HCT116 (cell line): ENCODE measurements at regions of chr4 and their contacts with region 1.

Region 1: GRCh38 chr4:47562297-47562696 is 77.2 kb downstream of the ATP10D start:
- DNase-seq: no peak
- ATAC-seq: no peak
- H3K4me3 ChIP-seq: no peak overlapping the region
- H3K27ac ChIP-seq: no peak overlapping the region
- H3K4me1 ChIP-seq: peaks cover 18 to 22% of the 10 kb centered on the region in 2 experiments
- H3K27me3 ChIP-seq: no peaks in the 10 kb centered on the region
- CTCF ChIP-seq: no peak
- POLR2A ChIP-seq: no peak
- RAD21 ChIP-seq: no peak

Region 2: GRCh38 chr4:47463235-47463956 is 98.9 kb before region 1 on chr4 and contains the start of gene COMMD8:
- CTCF ChIA-PET with region 1: no interaction called
- POLR2A ChIA-PET with region 1: no interaction called
- RAD21 ChIA-PET with region 1: no interaction called
- intact Hi-C with region 1: loop called (anchors 1 kb)
- DNase-seq: peak; percentile 89
- ATAC-seq: peak; percentile 96
- H3K4me3 ChIP-seq: peak within 1 kb of the TSS; percentile 67 to 73
- H3K27ac ChIP-seq: peak within 1 kb of the TSS; percentile 74
- H3K4me1 ChIP-seq: peaks cover 10 to 17% of the 10 kb centered on the region in 2 experiments; a peak in 3 of 4 replicates
- H3K27me3 ChIP-seq: no peaks in the 10 kb centered on the region
- CTCF ChIP-seq: peak in 1 of 3 experiments; percentile 18; a peak in 3 of 6 replicates
- POLR2A ChIP-seq: no peak
- RAD21 ChIP-seq: no peak
- total RNA-seq, gene COMMD8: 19.9 TPM

Region 3: GRCh38 chr4:47485047-47485692 is 77.1 kb before region 1 on chr4 and contains the start of gene ATP10D:
- CTCF ChIA-PET with region 1: no interaction called
- POLR2A ChIA-PET with region 1: no interaction called
- RAD21 ChIA-PET with region 1: no interaction called
- intact Hi-C with region 1: loop called (anchors 2 kb)
- DNase-seq: peak; percentile 74
- ATAC-seq: peak; percentile 100
- H3K4me3 ChIP-seq: peak within 1 kb of the TSS; percentile 61 to 65
- H3K27ac ChIP-seq: peak within 1 kb of the TSS; percentile 46
- H3K4me1 ChIP-seq: peaks cover 0 to 20% of the 10 kb centered on the region in 2 experiments; a peak in 3 of 4 replicates
- H3K27me3 ChIP-seq: no peaks in the 10 kb centered on the region
- CTCF ChIP-seq: no peak
- POLR2A ChIP-seq: peak; percentile 40
- RAD21 ChIP-seq: 0 out of 2 replicates have a peak, but pooled peaks have one; percentile 3
- total RNA-seq, gene ATP10D: 5.1 TPM

Region 4: DNA sequence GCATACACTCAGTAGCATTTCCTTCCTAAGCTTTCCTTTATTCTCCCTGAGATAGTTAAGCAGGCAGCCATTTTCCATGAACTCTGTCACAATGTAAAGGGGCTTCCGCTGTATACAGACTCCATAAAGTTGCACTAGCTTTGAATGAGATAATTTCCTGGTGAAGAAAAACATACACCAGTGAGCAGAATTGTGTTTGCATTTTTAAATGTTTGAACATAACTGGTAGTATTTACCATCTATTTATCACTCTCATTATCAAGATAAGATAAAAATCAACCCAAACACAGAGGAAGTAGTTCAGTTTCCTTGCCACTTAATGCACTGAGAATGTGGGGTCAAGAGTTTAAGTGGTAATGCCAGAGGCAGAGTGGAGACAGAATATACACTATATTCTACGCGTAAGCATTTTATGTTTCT is 517.7 kb after region 1 on chr4:
- CTCF ChIA-PET with region 1: no interaction called
- POLR2A ChIA-PET with region 1: no interaction called
- RAD21 ChIA-PET with region 1: no interaction called
- intact Hi-C with region 1: loop called (anchors 10 kb)
- DNase-seq: no peak
- ATAC-seq: peak; percentile 77
- H3K4me3 ChIP-seq: peak overlapping the region in 1 of 2 experiments; percentile 46; a peak in 2 of 4 replicates
- H3K27ac ChIP-seq: peak overlapping the region; percentile 45
- H3K4me1 ChIP-seq: peaks cover 24 to 36% of the 10 kb centered on the region in 2 experiments
- H3K27me3 ChIP-seq: no peaks in the 10 kb centered on the region
- CTCF ChIP-seq: no peak
- POLR2A ChIP-seq: no peak
- RAD21 ChIP-seq: no peak